Posterior cingulate gyrus (tissue), 11 donors: ENCODE measurements at regions of chr1 and their contacts with region 1.

Region 1: DNA sequence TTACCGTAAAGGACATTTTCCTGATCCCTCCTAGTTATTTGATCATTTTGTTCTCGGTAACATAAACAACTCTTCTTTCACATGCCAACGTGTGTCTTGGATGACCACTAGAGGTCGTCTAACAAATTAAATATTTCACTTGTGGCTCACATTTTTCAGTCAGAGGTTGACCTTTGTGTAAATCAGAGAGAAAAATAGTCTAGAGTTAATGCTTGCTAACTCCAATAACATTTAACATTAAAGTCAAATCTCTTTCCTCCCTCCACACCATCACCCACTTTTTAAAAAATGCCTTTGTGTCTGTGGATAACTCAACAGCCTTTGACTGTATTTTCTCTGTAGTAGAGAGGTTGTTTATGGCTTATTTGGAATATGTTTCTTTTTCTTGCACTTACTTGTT is 220.5 kb upstream of the B3GALT2 start:
- DNase-seq: no peak

Region 2: DNA sequence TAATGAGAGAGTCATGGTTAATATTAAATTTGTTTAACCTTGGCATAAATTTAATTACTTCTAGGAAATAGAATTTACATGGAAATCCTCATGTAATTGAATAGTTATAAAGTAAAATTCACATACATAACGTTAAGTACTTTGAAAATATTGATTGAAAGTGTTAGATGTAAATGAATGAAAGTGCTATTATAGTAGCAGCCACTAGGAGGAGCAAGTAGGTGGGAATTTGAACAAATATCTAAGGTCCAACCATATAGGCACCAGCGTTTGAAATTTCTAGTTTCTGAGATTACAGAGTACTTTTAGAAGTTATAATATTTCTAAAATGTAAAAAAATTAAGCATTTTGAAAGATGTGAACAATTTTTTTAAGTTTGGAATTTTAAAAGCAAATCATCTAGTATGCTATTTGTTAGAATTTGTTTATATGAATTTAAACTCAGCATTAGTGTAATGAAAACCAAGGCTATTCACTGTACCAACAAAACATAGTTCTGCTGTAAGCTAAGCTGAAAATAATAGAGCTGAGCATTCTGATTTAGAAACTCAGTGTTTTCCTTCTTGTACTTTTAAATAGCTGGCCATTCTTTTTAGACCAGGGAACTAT is 223.8 kb before region 1 on chr1:
- intact Hi-C with region 1: loop called (anchors 5 kb)
- DNase-seq: no peak